Heart right ventricle (tissue), 16 donors: ENCODE measurements at regions of chr2 and their contacts with region 1.

Region 1: GRCh38 chr2:97707362-97708047 is 5.9 kb upstream of the ZAP70 start:
- DNase-seq: no peak
- ATAC-seq: no peak
- H3K4me3 ChIP-seq: no peak overlapping the region
- H3K27ac ChIP-seq: no peak overlapping the region
- H3K4me1 ChIP-seq: peaks cover 0 to 8% (median 3%) of the 10 kb centered on the region in 9 donors
- H3K27me3 ChIP-seq: no peaks in the 10 kb centered on the region
- CTCF ChIP-seq: no peak

Region 2: DNA sequence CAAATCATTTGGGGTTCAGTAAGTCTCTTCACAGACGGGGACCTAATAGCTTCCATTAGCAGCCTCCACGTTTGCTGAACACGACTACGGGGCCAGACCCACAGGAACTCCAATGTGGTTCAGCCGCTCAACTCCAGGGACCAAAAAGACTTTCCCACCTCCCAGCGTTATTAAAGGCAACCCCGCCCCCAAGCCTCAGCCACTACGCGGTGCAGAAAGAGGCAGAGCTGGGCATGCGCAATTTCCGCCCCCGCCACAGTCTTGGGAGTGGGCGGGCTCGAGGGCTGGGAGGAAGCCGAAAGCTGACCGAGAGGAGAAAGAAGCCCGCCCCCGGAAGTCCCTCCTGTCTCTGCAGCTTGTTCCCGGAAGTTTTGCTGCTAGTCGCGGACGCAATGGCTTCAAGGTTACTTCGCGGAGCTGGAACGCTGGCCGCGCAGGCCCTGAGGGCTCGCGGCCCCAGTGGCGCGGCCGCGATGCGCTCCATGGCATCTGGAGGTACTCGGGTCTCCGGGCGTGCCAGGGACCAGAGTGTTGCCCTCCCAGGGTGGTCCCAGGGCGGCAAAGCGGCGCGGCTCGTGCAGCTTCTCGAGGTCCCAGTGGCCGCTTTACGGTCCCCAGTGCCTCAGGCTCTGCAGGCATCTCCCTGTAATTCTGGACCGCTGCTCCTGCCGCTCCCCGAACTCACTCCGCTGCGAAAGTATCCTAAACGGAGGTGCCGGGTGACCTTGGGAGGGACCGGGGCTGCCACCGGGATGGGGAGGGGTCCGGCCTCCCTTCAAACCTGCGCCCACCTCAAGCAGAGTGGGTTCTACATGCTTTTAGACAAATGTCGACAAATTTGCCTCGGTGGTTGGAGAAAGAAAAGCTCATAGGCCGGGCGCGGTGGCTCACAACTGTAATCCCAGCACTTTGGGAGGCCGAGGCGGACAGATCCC is 61.5 kb before region 1 on chr2 and contains the start of gene COX5B:
- intact Hi-C with region 1: no loop called
- DNase-seq: peak; percentile 99 to 100
- ATAC-seq: peak; percentile 99 to 100 (median 99)
- H3K4me3 ChIP-seq: peak within 1 kb of the TSS; percentile 73 to 98 (median 86)
- H3K27ac ChIP-seq: peak within 1 kb of the TSS; percentile 90 to 99 (median 96)
- H3K4me1 ChIP-seq: peaks cover 7 to 32% (median 25%) of the 10 kb centered on the region in 9 donors
- H3K27me3 ChIP-seq: no peaks in the 10 kb centered on the region
- CTCF ChIP-seq: peak in 1 of 9 donors; percentile 3
- total RNA-seq, gene COX5B: 886 to 1,398 (median 1,288) TPM

Region 3: DNA sequence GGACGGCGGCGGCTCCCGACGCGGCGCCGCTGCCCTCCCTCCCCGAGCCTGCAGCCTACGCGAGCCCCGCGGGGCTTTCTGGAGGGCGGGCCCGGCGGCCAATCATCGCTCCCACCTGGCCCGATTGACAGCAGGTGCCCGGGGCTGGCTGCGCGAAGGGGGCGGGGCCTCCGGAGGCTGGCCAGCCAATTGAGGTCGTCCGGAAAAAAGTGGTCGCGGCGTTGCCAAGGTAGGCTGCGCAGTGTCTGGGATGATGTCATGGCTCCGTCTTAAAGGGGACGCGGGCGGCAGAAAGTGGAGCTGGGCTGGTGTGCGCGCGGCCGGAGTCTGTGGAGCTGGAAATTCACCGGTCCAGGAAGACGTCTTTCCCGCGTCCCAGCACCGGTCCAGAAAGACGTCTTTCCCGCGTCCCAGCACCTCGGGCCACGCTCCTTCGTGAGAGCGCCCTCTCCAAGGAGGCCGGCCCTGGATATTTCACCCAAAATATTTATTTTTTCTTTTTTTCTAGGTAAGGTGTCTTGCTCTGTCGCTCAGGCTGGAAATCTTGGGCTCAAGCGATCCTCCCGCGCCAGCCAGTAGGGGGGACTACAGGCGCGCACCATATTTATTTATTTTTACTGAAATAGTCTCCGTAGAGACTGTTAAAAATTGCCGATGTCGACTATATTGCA is 43.4 kb before region 1 on chr2 and contains the start of gene ACTR1B:
- intact Hi-C with region 1: no loop called
- DNase-seq: peak; percentile 97 to 98
- ATAC-seq: peak; percentile 95 to 97 (median 96)
- H3K4me3 ChIP-seq: peak within 1 kb of the TSS; percentile 56 to 87 (median 68)
- H3K27ac ChIP-seq: peak within 1 kb of the TSS; percentile 84 to 100 (median 96)
- H3K4me1 ChIP-seq: peaks cover 0 to 38% (median 31%) of the 10 kb centered on the region in 9 donors
- H3K27me3 ChIP-seq: no peaks in the 10 kb centered on the region
- CTCF ChIP-seq: peak; percentile 35 to 80 (median 56)
- total RNA-seq, gene ACTR1B: 62.8 to 78.1 (median 71.4) TPM

Region 4: DNA sequence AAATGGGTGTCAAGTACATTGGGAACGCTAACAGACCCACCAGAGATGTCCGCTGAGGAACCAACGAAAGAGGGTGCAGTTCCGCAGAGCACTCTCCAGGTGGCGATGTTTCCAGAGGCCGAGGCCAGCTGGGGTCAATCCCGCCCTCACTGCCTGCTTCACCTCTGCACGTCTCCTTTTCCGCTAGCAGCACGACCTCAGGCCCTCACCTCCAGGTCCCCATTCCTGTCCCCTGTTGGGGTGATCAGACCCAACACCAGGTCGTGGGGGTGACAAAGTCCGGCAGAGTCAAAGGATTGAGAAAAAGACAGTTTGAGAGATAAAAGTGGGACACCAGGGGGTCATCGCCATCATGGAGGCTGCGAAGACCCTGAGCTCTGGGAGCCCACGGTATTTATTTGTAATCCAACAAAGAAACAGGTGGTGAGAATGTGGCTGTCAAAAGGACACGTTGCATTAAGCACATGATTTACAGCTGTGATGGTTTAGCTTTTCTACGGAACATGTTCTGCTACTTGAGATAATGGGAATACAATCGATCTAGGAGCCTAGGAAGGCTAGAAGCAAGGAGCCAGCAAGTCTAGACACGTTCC is 33.2 kb after region 1 on chr2:
- intact Hi-C with region 1: loop called in 5 of 10 experiments (anchors 5 kb)
- DNase-seq: peak in 1 of 2 donors; percentile 45
- ATAC-seq: peak in 5 of 8 donors; percentile 16 to 55 (median 33)
- H3K4me3 ChIP-seq: no peak overlapping the region
- H3K27ac ChIP-seq: no peak overlapping the region
- H3K4me1 ChIP-seq: peaks cover 0 to 27% (median 10%) of the 10 kb centered on the region in 9 donors
- H3K27me3 ChIP-seq: no peaks in the 10 kb centered on the region
- CTCF ChIP-seq: peak; percentile 24 to 75 (median 67)

Region 5: DNA sequence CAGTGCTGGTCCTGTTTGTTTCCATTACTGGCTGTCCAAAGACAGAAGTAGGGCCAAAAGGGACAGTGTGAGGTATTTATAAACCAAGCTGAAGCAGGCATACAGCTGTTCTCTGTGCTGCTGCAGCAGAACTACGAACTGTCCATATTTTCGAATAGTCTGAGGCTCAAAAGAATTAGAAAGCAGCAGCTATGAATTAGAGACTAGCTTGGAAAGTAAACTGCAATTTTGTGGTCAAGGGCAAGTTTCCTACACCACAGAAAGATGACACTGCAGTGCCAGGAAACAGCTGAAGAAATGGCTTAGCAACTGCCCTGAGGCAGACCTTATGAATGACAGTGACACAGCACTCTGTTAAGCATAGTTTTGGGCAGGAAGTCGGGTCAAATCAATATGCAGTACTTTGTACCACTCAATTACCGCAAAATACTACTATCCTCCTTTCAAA is 162.9 kb after region 1 on chr2:
- intact Hi-C with region 1: no loop called
- DNase-seq: peak in 1 of 2 donors; percentile 26
- ATAC-seq: peak; percentile 59 to 95 (median 90)
- H3K4me3 ChIP-seq: no peak overlapping the region
- H3K27ac ChIP-seq: peak overlapping the region; percentile 68 to 89 (median 78)
- H3K4me1 ChIP-seq: peaks cover 5 to 48% (median 37%) of the 10 kb centered on the region in 9 donors
- H3K27me3 ChIP-seq: no peaks in the 10 kb centered on the region
- CTCF ChIP-seq: peak in 1 of 9 donors; percentile 8